ENCODE measurements at regions of chr1 and their contacts with region 1.

Region 1: GRCh38 chr1:10690484-10690883 is 106.0 kb downstream of the CASZ1 start:
- DNase-seq: no peak
- H3K4me3 ChIP-seq: no peak overlapping the region
- H3K27ac ChIP-seq: no peak overlapping the region
- H3K4me1 ChIP-seq: peaks cover 0 to 40% (median 32%) of the 10 kb centered on the region in 4 experiments
- H3K27me3 ChIP-seq: no peaks in the 10 kb centered on the region

Region 2: DNA sequence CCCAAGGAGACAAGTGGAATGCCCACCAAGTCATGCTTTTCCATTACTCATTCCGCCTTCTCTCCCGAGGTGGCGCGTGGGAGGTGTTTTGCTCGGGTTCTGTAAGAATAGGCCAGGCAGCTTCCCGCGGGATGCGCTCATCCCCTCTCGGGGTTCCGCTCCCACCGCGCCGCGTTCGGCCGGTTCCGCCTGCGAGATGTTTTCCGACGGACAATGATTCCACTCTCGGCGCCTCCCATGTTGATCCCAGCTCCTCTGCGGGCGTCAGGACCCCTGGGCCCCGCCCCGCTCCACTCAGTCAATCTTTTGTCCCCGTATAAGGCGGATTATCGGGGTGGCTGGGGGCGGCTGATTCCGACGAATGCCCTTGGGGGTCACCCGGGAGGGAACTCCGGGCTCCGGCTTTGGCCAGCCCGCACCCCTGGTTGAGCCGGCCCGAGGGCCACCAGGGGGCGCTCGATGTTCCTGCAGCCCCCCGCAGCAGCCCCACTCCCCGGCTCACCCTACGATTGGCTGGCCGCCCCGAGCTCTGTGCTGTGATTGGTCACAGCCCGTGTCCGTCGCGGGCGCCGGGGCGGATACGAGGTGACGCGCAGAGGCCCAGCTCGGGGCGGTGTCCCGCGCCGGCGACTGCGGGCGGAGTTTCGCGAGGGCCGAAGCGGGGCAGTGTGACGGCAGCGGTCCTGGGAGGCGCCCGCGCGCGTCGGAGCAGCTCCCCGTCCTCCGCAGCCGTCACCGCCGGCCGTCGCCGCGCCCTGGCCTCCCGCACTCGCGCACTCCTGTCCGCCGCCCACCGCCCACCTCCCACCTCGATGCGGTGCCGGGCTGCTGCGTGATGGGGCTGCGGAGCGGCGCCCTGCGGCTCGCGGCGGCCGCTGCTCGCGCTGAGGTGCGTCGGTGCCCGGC is 480.3 kb before region 1 on chr1 and contains the start of gene KIF1B:
- CTCF ChIA-PET with region 1: no interaction called
- POLR2A ChIA-PET with region 1: no interaction called
- DNase-seq: peak; percentile 96 to 97 (median 97)
- H3K4me3 ChIP-seq: peak within 1 kb of the TSS; percentile 73 to 91 (median 87)
- H3K27ac ChIP-seq: peak within 1 kb of the TSS in 1 of 2 experiments; percentile 61
- H3K4me1 ChIP-seq: peaks cover 3 to 18% (median 16%) of the 10 kb centered on the region in 4 experiments
- H3K27me3 ChIP-seq: peaks cover 0 to 8% (median 2%) of the 10 kb centered on the region in 5 experiments

Region 3: DNA sequence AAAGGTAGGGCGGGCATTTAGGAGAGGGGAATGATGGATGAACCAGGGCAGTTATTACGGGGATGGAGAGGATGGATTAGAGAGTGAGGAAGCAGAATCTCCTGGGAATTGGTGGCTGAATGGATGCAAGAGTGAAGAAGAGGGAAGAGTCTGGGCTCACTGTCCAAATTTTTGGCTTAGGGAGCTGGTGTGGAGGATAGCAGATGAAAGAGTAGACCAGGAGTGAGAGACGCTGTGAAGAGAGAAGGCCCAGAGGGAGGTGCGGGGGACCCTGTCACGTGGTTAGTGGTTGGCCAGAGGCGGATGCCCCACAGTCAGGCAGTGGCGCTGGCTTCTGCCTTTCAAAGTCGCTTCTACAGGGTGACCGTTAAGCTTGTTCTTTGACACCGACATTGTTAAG is 137.4 kb before region 1 on chr1:
- CTCF ChIA-PET with region 1: no interaction called
- POLR2A ChIA-PET with region 1: no interaction called
- DNase-seq: peak in 2 of 3 donors; percentile 2 to 20
- H3K4me3 ChIP-seq: no peak overlapping the region
- H3K27ac ChIP-seq: no peak overlapping the region
- H3K4me1 ChIP-seq: peaks cover 0 to 6% (median 5%) of the 10 kb centered on the region in 4 experiments
- H3K27me3 ChIP-seq: no peaks in the 10 kb centered on the region

Region 4: GRCh38 chr1:10679496-10680220 is 10.8 kb before region 1 on chr1:
- CTCF ChIA-PET with region 1: interaction called, 10 read pairs
- POLR2A ChIA-PET with region 1: no interaction called
- DNase-seq: peak; percentile 37 to 74 (median 72)
- H3K4me3 ChIP-seq: no peak overlapping the region
- H3K27ac ChIP-seq: no peak overlapping the region
- H3K4me1 ChIP-seq: peaks cover 0 to 3% (median 0%) of the 10 kb centered on the region in 4 experiments
- H3K27me3 ChIP-seq: no peaks in the 10 kb centered on the region

Region 5: DNA sequence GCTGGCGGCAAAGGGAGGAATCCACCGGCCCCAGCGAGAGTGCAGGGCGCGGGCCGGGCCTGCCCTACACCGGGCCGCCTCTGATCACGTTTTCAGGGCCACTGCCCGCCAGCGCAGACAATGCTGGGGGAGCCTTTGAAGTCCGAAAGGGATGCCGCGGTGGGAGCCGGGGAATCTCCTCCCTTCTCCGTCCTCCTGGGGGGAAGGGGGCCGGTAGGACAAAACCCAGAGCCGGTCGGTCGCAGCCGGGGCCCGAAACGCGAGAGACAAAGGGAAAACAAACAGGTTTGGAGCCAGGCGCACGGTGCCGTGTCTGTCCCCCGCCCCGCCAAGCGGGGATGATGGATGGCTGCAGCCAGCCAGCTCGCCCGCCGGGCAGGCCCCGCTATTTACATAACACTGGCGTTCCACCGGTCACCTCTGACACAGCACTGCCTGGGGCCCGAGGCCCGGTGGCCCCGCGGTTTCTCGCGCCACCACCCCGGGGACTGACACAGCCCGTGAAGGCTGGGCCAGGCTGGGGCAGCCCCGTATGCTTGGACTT is 14.0 kb after region 1 on chr1:
- CTCF ChIA-PET with region 1: no interaction called
- POLR2A ChIA-PET with region 1: no interaction called
- DNase-seq: no peak
- H3K4me3 ChIP-seq: no peak overlapping the region
- H3K27ac ChIP-seq: no peak overlapping the region
- H3K4me1 ChIP-seq: peaks cover 0 to 7% (median 0%) of the 10 kb centered on the region in 4 experiments
- H3K27me3 ChIP-seq: no peaks in the 10 kb centered on the region

Region 6: GRCh38 chr1:10901086-10901890 is 210.8 kb after region 1 on chr1:
- CTCF ChIA-PET with region 1: no interaction called
- POLR2A ChIA-PET with region 1: no interaction called
- DNase-seq: no peak
- H3K4me3 ChIP-seq: no peak overlapping the region
- H3K27ac ChIP-seq: no peak overlapping the region
- H3K4me1 ChIP-seq: peaks cover 3 to 69% (median 42%) of the 10 kb centered on the region in 4 experiments
- H3K27me3 ChIP-seq: no peaks in the 10 kb centered on the region

Measured in common myeloid progenitor, CD34-positive (primary cell).